ENCODE measurements at regions of chr3 and their contacts with region 1.

Region 1: DNA sequence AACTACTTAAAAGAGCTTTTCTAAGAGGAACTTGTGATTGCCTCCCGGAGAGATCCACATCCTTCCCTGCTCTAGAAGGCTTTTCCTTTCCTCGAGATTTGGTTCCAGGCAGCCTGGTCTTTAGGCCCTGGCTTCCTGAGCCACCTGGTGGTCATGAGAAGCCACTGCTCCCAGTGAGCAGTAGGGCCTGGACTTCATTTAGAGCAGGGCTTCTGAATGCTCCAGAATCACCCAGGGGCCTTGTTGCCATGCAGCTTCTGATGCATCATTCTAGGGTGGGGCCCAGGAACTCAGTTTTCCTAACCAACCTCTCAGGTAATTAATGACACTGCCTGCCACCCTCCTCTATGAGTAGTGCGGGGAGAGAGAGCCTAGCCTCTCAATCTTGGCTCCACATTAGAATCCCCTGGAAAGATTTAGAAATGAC is 29.6 kb downstream of the PSMD6 start:
- DNase-seq: peak; percentile 23
- H3K4me3 ChIP-seq: no peak overlapping the region
- CTCF ChIP-seq: peak; percentile 92

Region 2: DNA sequence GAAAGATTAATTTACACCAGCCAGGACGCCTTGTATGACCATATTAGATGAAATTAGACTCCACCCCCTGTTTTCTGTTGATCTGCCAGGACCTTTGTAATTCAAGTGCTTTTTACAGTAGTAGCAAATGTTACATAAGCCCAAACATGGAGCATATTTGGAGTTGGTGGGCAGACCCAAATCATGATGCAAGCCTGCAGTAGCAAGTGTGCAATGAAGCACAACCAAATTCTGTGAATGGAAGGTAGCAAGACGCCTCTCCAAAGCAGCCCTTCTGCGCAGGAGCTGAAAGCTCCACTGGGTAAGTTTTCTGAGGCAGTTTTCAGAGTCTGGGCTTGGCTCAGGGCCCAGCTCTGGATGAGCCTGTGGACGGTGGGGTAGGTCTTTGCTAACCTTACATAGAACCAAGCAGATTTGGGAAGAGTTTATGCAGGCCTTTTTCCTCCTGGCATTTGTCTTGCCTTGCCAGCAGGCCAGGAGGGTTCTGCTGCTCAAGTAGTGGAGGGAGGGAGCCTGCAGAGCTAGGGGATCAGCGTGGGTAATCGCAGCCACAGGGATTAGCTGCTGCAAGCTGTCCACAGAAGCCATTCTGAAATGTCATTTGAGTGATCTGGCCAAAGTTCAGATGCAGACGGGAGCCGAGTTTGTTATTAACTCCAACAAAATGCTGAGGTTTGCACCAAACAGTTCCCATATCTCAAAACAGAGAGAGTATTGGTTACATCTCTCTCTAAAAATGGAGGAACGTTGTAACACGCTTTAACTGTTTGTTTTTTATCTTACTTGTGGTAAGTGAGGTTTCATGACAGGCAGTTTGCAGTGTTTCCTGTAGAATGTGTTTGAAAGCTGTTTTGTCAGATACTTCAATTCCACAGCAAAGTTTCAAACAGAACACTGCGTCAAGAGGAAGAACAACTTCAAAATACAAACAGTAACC is 25.7 kb before region 1 on chr3:
- CTCF ChIA-PET with region 1: interaction called, 68 read pairs
- POLR2A ChIA-PET with region 1: no interaction called
- DNase-seq: no peak
- H3K4me3 ChIP-seq: peak overlapping the region; percentile 38
- CTCF ChIP-seq: no peak

Region 3: GRCh38 chr3:63975723-63976122 is 17.9 kb before region 1 on chr3:
- CTCF ChIA-PET with region 1: interaction called, 143 read pairs
- POLR2A ChIA-PET with region 1: no interaction called
- DNase-seq: no peak
- H3K4me3 ChIP-seq: no peak overlapping the region
- CTCF ChIP-seq: no peak

Region 4: DNA sequence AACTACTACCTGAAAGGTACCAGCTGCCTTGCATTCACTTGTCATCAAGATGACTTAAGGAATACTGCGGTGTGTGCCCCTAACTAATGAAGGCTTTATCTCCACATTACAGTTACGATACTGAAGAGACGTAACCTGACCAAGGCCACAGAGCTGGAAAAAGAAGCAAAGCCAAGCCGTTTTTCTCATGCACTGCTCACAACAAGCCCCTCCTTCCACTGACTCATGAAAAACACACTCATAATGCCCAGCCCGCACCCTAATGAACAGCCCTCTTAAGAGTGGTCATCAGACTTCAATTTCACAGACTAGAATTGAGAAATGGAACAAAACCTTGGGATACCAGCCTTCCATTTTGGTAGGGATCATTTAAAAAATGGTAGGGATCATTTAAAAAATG is 18.0 kb after region 1 on chr3:
- CTCF ChIA-PET with region 1: interaction called, 26 read pairs
- POLR2A ChIA-PET with region 1: no interaction called
- DNase-seq: no peak
- H3K4me3 ChIP-seq: no peak overlapping the region
- CTCF ChIP-seq: no peak